Activated CD8-positive, alpha-beta T cell treated with anti-CD3 and anti-CD28 coated beads, Interleukin-2, amount 10 ng/mL, durations not matched to agents 7 days and 5 days (primary cell): ENCODE measurements at regions of chr18 and their contacts with region 1.

Region 1: GRCh38 chr18:59402432-59403090 is 43.5 kb upstream of the LMAN1 start:
- DNase-seq: peak; percentile 75
- ATAC-seq: peak; percentile 99
- H3K4me3 Mint-ChIP-seq: no peak overlapping the region
- H3K27ac Mint-ChIP-seq: no peak overlapping the region
- H3K4me1 Mint-ChIP-seq: no peaks in the 10 kb centered on the region
- H3K27me3 Mint-ChIP-seq: peaks cover 7% of the 10 kb centered on the region

Region 2: GRCh38 chr18:59249205-59249774 is 153.3 kb before region 1 on chr18:
- CTCF ChIA-PET with region 1: interaction called, 52 read pairs
- POLR2A ChIA-PET with region 1: no interaction called
- DNase-seq: peak; percentile 55
- ATAC-seq: no peak
- H3K4me3 Mint-ChIP-seq: no peak overlapping the region
- H3K27ac Mint-ChIP-seq: no peak overlapping the region
- H3K4me1 Mint-ChIP-seq: no peaks in the 10 kb centered on the region
- H3K27me3 Mint-ChIP-seq: peaks cover 31% of the 10 kb centered on the region

Region 3: GRCh38 chr18:59308248-59308937 is 94.2 kb before region 1 on chr18:
- CTCF ChIA-PET with region 1: interaction called, 113 read pairs
- POLR2A ChIA-PET with region 1: no interaction called
- DNase-seq: peak; percentile 73
- ATAC-seq: peak; percentile 95
- H3K4me3 Mint-ChIP-seq: peak overlapping the region; percentile 52
- H3K27ac Mint-ChIP-seq: no peak overlapping the region
- H3K4me1 Mint-ChIP-seq: no peaks in the 10 kb centered on the region
- H3K27me3 Mint-ChIP-seq: peaks cover 47% of the 10 kb centered on the region

Region 4: DNA sequence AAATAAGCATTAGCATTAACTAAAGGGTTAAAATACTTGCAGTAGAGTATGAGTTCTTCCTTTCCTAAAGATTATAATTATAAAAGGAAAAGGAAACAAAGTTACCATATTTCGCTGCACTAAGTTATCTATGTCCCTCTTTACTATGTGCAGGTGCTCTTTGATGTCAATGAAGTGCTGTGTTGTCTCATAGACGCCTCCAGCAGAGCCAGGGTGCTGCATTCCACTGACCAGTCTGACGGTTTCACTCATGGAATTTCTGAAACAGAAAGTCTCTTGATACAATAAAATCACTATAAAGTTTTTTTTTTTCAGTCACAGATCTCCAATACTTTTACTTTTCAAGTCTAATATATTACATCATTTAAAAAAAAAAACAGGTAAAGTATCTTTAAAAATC is 69.6 kb before region 1 on chr18:
- CTCF ChIA-PET with region 1: interaction called, 12 read pairs
- POLR2A ChIA-PET with region 1: no interaction called
- DNase-seq: no peak
- ATAC-seq: no peak
- H3K4me3 Mint-ChIP-seq: no peak overlapping the region
- H3K27ac Mint-ChIP-seq: no peak overlapping the region
- H3K4me1 Mint-ChIP-seq: no peaks in the 10 kb centered on the region
- H3K27me3 Mint-ChIP-seq: no peaks in the 10 kb centered on the region

Region 5: DNA sequence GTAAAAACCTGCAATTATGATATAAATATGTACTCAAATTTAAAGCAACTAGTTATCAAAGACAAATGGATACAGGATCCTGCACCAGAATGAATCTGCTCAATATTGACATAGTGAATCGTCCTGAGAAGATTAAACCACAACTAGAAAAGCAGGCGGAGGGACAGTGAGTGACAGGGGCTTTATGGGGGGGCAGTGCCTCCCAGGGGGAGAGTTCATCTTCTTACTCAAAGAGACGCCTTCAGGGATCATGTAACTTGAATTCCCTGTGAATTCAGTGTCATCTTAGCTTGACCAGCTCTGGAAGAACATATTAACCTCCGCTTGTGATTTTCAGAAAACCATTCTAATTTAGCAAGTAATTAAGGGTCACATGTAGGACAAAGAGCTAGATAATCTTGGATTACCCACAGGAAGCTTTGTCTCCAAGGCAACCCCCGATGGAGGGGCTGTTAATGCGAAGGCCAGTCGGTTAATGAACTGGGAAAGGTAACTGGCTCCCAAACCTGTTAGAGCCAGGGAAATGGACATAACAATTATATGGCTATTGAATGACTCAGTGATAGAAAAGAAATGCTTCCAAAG is 26.1 kb before region 1 on chr18:
- CTCF ChIA-PET with region 1: interaction called, 10 read pairs
- POLR2A ChIA-PET with region 1: no interaction called
- DNase-seq: no peak
- ATAC-seq: no peak
- H3K4me3 Mint-ChIP-seq: no peak overlapping the region
- H3K27ac Mint-ChIP-seq: no peak overlapping the region
- H3K4me1 Mint-ChIP-seq: peaks cover 2% of the 10 kb centered on the region
- H3K27me3 Mint-ChIP-seq: peaks cover 17% of the 10 kb centered on the region

Region 6: DNA sequence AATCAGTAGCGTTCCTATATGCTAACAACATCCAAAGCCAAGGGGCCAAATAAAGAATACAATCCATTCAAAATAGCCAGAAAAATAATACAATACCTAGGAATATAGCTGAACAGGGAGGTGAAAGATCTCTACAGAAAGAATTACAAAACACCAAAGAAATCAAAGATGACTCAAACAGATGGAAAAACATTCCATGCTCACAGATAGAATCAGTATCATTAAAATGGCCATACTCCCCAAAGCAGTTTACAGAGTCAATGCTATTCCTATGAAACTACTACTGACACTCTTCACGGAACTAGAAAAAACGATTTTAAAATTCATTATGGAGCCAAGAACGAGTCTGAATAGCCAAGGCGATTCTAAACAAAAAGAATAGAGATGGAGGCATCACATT is 237.3 kb after region 1 on chr18:
- CTCF ChIA-PET with region 1: no interaction called
- POLR2A ChIA-PET with region 1: no interaction called
- DNase-seq: no peak
- ATAC-seq: no peak
- H3K4me3 Mint-ChIP-seq: no peak overlapping the region
- H3K27ac Mint-ChIP-seq: no peak overlapping the region
- H3K4me1 Mint-ChIP-seq: no peaks in the 10 kb centered on the region
- H3K27me3 Mint-ChIP-seq: peaks cover 5% of the 10 kb centered on the region

Region 7: DNA sequence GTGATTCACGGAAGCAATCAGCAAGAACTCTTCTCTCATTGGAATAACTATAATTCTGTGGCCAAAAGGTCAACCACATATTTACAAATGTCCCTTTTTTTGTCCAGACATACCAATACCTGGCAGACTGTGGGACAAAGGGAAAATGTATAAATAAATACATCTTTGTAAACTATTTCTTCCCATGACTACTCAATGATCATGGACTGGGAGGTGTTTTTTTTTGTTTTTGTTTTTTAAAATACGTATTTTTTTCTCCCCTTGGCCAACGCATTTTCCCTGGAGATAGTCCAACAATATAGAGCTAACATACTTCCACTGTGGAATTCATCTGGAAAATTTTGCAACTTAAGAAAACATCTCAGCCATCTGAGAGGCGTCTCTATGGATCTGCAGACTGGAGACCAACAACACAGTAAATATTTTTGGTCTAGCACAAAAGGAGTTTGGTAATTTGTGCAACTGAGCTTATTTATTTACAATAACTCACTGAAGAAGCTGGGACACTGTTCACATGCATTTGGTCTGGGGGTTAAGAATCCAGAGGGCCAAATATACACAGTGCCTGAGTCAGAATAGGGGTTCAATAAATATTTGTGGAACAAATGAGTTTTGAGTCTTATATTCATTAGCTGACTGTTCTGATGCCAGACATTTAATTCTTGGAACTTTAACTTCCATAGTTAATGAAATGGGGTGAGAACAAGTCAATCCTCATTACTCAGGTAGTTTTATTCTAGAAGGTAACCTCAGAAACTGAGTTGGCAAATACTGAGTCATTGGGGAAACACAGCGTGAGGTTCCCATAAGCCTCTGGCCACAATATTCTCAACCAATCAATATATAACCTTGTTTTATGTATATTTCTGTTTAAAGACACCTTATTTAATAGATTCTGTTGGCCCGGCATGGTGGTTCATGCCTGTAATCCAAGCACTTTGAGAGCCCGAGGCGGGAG is 258.5 kb after region 1 on chr18:
- CTCF ChIA-PET with region 1: no interaction called
- POLR2A ChIA-PET with region 1: no interaction called
- DNase-seq: no peak
- ATAC-seq: no peak
- H3K4me3 Mint-ChIP-seq: no peak overlapping the region
- H3K27ac Mint-ChIP-seq: no peak overlapping the region
- H3K4me1 Mint-ChIP-seq: no peaks in the 10 kb centered on the region
- H3K27me3 Mint-ChIP-seq: peaks cover 3% of the 10 kb centered on the region